ENCODE measurements at regions of chr11 and their contacts with region 1.

Region 1: GRCh38 chr11:58286249-58286648 is 18.2 kb upstream of the OR10W1 start:
- DNase-seq: no peak
- H3K4me3 ChIP-seq: no peak overlapping the region
- H3K27ac ChIP-seq: no peak overlapping the region
- H3K4me1 ChIP-seq: no peaks in the 10 kb centered on the region
- H3K27me3 ChIP-seq: peaks cover 0 to 3% (median 0%) of the 10 kb centered on the region in 4 donors
- CTCF ChIP-seq: peak in 5 of 6 experiments; percentile 33 to 70 (median 48)
- POLR2A ChIP-seq: no peak

Region 2: DNA sequence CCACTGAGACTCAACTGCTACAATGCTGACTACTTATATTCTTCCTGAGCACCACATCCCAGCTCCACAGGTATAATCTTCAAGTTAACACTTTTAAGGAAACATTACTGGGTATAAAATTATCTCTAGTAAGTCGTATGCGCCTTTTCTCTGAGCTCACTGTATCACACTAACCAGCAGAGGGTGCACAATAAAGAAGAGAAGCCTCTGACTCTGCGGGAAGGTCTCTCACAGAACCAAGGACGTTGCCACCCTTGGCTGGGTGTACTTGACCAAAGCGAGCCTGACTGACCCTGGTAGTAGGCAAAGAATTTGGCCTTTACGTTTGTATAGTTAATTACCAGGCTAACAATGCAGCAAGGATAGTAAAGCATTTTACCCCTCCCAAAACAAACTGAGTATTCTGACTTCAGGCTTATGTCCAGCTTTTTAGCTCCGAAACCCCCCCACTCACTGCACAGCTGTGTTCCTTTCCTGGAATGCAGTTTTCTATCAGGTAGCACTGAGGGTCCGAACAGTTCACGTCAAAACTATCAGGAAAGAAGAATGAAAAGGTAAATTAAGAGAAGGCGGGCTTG is 534.5 kb before region 1 on chr11 and contains the start of gene BTBD18:
- intact Hi-C with region 1: loop called (anchors 10 kb)
- DNase-seq: no peak
- H3K4me3 ChIP-seq: no peak within 1 kb of the TSS
- H3K27ac ChIP-seq: peak within 1 kb of the TSS in 1 of 4 donors; percentile 11
- H3K4me1 ChIP-seq: peaks cover 0 to 10% (median 0%) of the 10 kb centered on the region in 3 donors
- H3K27me3 ChIP-seq: no peaks in the 10 kb centered on the region
- CTCF ChIP-seq: peak in 5 of 6 experiments; percentile 40 to 70 (median 53)
- POLR2A ChIP-seq: no peak
- total RNA-seq, gene BTBD18: not detected

Measured in esophagus squamous epithelium (tissue), 5 donors.